ENCODE measurements at regions of chr3 and their contacts with region 1.

Region 1: DNA sequence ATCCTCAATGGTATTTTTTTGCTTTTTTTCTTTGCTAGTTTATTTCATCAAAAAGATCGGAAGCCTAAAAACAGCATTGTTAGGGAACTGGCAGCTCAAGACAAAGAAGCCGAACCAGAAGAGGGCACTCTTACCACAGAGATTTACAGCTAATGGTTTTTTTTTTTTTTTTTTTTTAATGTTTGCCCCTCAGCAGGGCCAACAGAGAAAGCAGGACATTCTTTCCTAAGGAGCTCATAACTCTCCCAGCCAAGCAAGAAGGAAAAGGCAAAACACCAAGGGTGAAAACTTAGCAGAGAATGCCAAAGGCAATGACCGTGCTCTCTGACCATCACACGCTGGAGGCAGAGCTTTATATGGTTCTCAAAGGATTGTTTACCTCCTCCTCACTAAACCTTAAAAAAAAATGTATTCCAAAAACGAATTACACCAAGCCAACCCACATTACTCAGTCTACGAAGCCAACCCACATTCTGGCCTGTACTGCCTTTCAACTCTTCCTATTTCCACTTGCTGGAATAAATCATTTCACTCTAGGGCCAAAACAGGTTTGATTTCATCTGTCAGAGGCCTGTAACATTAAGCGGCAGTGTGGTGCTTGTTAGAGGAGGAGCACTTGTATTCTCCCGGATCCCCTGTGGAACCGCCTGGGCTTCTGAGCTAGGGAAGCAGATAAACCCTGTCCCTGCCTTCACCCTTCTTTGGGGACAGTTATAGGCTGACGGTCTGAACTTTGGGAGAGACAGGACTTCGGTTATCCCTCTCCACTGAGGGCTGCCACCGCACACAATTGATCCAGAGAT is 35.6 kb upstream of the GYG1 start:
- DNase-seq: peak in 1 of 2 experiments; percentile 53
- H3K4me3 ChIP-seq: no peak overlapping the region
- H3K27ac ChIP-seq: no peak overlapping the region
- H3K4me1 ChIP-seq: peaks cover 0 to 7% (median 4%) of the 10 kb centered on the region in 4 experiments; a peak in 4 of 7 replicates
- H3K27me3 ChIP-seq: no peaks in the 10 kb centered on the region
- CTCF ChIP-seq: peak in 2 of 3 experiments; percentile 50 to 63; a peak in 2 of 4 replicates
- EP300 ChIP-seq: no peak
- POLR2A ChIP-seq: no peak
- RAD21 ChIP-seq: peak; percentile 78 to 83

Region 2: GRCh38 chr3:148790851-148791735 is 164.7 kb before region 1 on chr3:
- CTCF ChIA-PET with region 1: no interaction called
- POLR2A ChIA-PET with region 1: no interaction called
- DNase-seq: no peak
- H3K4me3 ChIP-seq: no peak overlapping the region
- H3K27ac ChIP-seq: no peak overlapping the region
- H3K4me1 ChIP-seq: no peaks in the 10 kb centered on the region
- H3K27me3 ChIP-seq: no peaks in the 10 kb centered on the region
- CTCF ChIP-seq: no peak
- EP300 ChIP-seq: no peak
- POLR2A ChIP-seq: no peak
- RAD21 ChIP-seq: no peak

Region 3: GRCh38 chr3:149020196-149020838 is 64.6 kb after region 1 on chr3:
- CTCF ChIA-PET with region 1: interaction called, 25 read pairs
- POLR2A ChIA-PET with region 1: no interaction called
- DNase-seq: no peak
- H3K4me3 ChIP-seq: peak overlapping the region in 2 of 4 experiments; percentile 13 to 19; a peak in 2 of 8 replicates
- H3K27ac ChIP-seq: peak overlapping the region; percentile 27; the same call in 1 of the 2 replicates
- H3K4me1 ChIP-seq: peaks cover 2 to 20% (median 15%) of the 10 kb centered on the region in 4 experiments
- H3K27me3 ChIP-seq: no peaks in the 10 kb centered on the region
- CTCF ChIP-seq: no peak
- EP300 ChIP-seq: no peak
- POLR2A ChIP-seq: no peak
- RAD21 ChIP-seq: no peak

Region 4: DNA sequence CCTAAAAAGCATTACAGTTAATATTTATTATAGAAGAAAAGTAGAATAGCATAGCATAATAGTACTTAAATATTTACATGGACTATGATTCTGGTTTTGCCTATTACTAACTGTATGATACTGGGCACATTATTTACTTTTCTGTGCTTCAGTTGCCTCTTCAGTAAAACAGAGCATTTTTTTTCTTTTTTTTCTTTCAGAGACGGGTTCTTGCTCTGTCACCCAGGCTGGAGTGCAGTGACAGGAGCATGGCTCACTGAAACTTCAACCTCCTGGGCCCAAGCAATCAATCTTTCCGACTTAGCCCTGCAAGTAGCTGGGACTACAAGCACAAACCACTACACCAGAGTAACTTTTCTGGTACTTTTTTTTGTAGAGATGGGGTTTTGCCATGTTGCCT is 82.6 kb after region 1 on chr3:
- CTCF ChIA-PET with region 1: interaction called, 12 read pairs
- POLR2A ChIA-PET with region 1: no interaction called
- DNase-seq: no peak
- H3K4me3 ChIP-seq: no peak overlapping the region
- H3K27ac ChIP-seq: no peak overlapping the region
- H3K4me1 ChIP-seq: no peaks in the 10 kb centered on the region
- H3K27me3 ChIP-seq: no peaks in the 10 kb centered on the region
- CTCF ChIP-seq: no peak
- EP300 ChIP-seq: no peak
- POLR2A ChIP-seq: no peak
- RAD21 ChIP-seq: no peak

Region 5: GRCh38 chr3:149273096-149273751 is 317.5 kb after region 1 on chr3:
- CTCF ChIA-PET with region 1: interaction called, 50 read pairs
- POLR2A ChIA-PET with region 1: no interaction called
- DNase-seq: peak in 1 of 2 experiments; percentile 56
- H3K4me3 ChIP-seq: no peak overlapping the region
- H3K27ac ChIP-seq: no peak overlapping the region
- H3K4me1 ChIP-seq: no peaks in the 10 kb centered on the region; a peak in 1 of 7 replicates
- H3K27me3 ChIP-seq: no peaks in the 10 kb centered on the region
- CTCF ChIP-seq: peak in 2 of 3 experiments; percentile 99 to 100; a peak in 3 of 4 replicates
- EP300 ChIP-seq: no peak
- POLR2A ChIP-seq: no peak
- RAD21 ChIP-seq: peak; percentile 100

Region 6: DNA sequence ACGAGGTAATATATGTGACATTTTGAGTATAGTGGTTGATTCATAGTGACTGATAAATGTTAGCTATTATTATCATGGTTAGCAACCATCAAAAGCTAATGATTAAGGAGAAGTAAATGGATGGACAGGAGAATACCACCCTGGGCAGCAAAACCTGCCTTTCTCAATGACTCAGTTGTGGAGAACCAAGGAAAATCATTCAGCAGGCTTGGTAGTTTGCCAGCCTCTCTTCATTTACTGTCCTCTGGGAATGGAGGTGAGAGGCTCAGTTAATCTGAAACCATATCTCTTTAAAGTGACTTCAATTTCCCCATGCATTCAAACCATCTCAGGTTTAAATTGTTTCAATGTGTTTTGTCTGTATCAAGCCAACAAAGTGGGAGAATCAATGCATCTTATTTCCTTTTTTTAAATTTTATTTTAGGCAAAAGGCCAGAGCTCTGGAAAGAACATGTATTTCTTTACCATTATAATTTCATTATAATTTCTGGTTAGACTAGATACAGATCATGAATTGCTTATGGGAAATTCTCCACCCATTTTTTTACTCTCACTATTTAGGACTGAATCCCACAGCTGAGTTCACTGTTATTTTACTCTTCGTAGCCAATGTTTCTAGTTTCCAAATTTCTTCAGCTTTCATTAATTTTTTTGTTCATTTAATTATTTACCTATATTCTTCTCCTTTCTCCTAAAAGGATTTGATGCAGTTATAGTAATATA is 375.0 kb after region 1 on chr3:
- CTCF ChIA-PET with region 1: interaction called, 16 read pairs
- POLR2A ChIA-PET with region 1: no interaction called
- DNase-seq: no peak
- H3K4me3 ChIP-seq: no peak overlapping the region
- H3K27ac ChIP-seq: no peak overlapping the region
- H3K4me1 ChIP-seq: peaks cover 0 to 9% (median 3%) of the 10 kb centered on the region in 4 experiments; a peak in 4 of 7 replicates
- H3K27me3 ChIP-seq: no peaks in the 10 kb centered on the region
- CTCF ChIP-seq: no peak
- EP300 ChIP-seq: no peak
- POLR2A ChIP-seq: no peak
- RAD21 ChIP-seq: no peak

Region 7: DNA sequence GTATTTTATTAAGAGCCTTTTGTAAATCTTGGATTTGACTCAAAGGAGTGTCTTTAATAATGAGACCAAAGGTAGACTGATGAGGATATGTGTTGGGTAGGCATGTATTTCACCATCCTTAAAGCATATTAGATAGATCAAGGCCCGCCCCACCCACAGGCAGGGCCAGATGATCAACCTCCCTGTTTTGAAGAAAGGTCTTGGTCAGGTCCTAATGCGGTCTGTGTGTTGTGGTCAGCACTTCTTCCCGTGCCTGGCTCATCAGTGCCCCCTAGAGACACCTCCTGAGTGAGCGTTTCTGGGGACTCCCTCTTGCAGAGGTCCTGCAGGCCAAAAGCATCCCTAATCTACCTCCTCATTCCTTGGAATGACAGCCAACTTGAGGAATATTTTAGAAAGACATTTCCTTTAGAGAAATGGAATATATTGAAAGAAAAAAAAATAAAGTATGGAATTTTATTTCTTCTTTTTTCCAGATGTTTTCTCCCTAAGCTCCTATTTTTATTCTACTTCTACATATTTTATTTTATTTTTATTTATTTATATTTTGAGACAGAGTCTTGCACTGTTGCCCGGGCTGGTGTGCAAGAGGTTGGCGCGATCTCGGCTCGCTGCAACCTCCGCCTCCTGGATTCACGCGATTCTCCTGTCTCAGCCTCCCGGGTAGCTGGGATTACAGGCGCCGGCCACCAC is 524.7 kb after region 1 on chr3:
- CTCF ChIA-PET with region 1: interaction called, 14 read pairs
- POLR2A ChIA-PET with region 1: no interaction called
- DNase-seq: peak; percentile 80 to 90
- H3K4me3 ChIP-seq: no peak overlapping the region
- H3K27ac ChIP-seq: no peak overlapping the region
- H3K4me1 ChIP-seq: no peaks in the 10 kb centered on the region
- H3K27me3 ChIP-seq: no peaks in the 10 kb centered on the region
- CTCF ChIP-seq: peak; percentile 90 to 95 (median 92)
- EP300 ChIP-seq: no peak
- POLR2A ChIP-seq: no peak
- RAD21 ChIP-seq: peak; percentile 93 to 95

Measured in H1 (cell line).